Left lung (tissue), 14 donors: ENCODE measurements at regions of chr18 and their contacts with region 1.

Region 1: GRCh38 chr18:62249478-62250097 is 62.5 kb downstream of the RELCH start:
- DNase-seq: peak in 3 of 4 donors; percentile 43 to 77 (median 60)
- ATAC-seq: peak; percentile 71
- H3K4me3 ChIP-seq: no peak overlapping the region
- H3K27ac ChIP-seq: no peak overlapping the region
- H3K4me1 ChIP-seq: no peaks in the 10 kb centered on the region
- H3K27me3 ChIP-seq: no peaks in the 10 kb centered on the region
- CTCF ChIP-seq: peak; percentile 75 to 80

Region 2: DNA sequence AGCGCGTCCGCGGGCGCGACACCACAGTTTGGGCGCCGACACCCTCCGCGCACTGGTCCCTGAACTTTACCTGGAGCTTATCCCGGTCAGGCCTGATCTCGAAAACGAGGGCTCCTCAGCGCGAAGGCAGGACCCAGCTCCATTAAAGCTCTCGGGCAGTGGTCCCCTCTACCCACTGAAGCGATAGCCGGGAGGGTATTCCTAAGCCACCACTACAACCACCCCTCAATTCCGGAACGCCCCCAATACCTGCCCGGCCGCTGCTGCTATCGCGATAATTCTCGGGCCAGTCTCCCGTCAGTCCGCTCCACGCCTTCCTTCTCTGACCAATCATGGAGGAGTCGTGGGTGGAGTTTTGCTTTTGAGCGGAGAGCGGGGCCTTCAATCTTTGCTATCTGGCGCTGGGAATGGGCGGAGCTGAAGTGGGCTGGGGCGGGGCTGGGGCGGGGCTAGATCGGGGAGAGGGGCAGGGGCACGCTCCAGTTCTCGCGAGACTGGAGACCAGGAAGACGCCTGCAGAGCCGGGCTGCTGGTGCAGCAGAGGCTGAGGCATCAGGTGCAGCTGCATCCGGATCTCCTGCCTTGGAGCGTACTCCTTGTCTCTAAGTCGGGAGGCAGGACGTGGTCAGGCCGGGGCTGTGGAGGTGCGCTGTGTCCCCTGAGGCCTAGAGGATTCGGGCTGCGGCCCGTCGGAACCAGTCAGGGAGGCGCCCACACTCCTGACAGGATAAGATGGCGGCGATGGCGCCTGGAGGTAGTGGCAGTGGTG is 62.6 kb before region 1 on chr18 and contains the starts of genes PIGN and RELCH:
- intact Hi-C with region 1: loop called in 1 of 2 experiments (anchors 10 kb)
- DNase-seq: peak; percentile 94 to 99 (median 96)
- ATAC-seq: peak; percentile 97
- H3K4me3 ChIP-seq: peak within 1 kb of the TSS; percentile 82 to 93
- H3K27ac ChIP-seq: peak within 1 kb of the TSS; percentile 75 to 86
- H3K4me1 ChIP-seq: peaks cover 14 to 61% of the 10 kb centered on the region in 2 donors
- H3K27me3 ChIP-seq: no peaks in the 10 kb centered on the region
- CTCF ChIP-seq: peak in 1 of 2 donors; percentile 12
- polyA plus RNA-seq, gene PIGN: 28.1 to 36.8 (median 29.3) TPM
- polyA plus RNA-seq, gene RELCH: 27.7 to 40.7 (median 34.7) TPM